Posterior vena cava (tissue), 2 donors: ENCODE measurements at regions of chr6 and their contacts with region 1.

Region 1: DNA sequence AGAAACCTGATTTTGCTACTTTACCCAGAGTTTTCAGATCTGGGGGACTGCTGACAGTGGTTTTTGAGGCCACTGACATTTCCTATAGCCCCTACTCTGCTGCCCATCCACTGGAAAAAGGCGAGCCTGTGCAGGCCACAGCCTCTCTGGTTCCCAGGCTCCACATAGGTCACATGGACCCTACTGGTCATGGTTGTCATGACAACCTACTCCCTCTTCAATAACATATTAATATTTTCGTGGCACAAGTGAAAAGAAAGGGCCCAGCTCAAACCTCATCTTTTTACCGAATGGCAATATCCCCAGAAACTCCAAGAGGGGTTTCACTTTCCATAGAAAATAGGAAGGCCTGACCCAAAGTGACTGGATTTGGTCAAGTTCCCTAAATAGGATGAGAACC is 11.0 kb upstream of the FOXO3 start:
- DNase-seq: no peak

Region 2: DNA sequence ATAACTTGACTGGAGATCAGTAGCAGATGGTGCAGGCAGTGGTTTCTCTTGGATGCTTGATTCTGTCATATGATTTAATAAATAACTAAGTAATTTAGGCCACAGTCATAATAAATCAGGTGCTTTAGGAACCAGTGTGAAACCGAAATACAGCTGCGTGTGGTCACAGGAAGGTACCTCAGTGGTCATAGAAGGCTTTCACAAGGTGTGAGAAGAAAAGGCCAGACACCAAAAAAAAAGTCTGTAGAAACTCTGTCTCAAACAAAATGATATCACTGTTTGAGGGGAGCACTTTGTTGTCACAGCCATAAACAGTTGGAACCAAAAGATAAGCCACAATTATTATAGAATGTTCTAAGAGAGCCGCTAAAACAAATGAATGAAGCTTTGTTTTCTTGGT is 355.0 kb after region 1 on chr6:
- intact Hi-C with region 1: no loop called
- DNase-seq: no peak

Region 3: GRCh38 chr6:109073344-109074132 is 523.8 kb after region 1 on chr6:
- intact Hi-C with region 1: loop called (anchors 5 kb)
- DNase-seq: no peak

Region 4: DNA sequence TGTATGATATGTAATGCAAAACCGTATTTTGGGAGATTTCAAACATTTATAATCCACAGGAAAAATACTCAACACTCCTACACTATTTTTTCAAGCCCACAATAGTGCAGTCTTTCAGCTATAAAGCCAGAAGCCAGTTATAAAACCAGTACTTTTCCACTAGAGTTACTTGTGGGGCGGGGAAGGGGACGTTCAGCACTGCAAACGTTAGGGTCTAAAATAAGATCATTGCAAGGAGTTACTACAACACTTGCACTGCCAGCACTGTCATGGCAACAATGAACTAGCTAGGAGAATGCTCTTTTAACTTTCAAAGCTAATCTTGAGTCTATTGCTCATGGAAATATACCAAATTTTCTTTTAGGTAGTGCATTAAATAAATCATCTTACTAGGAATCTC is 530.2 kb after region 1 on chr6:
- intact Hi-C with region 1: loop called in 1 of 2 experiments (anchors 5 kb)
- DNase-seq: no peak

Region 5: GRCh38 chr6:109482905-109483735 is 933.4 kb after region 1 on chr6 and contains the start of gene ZBTB24:
- intact Hi-C with region 1: no loop called
- DNase-seq: peak; percentile 97
- total RNA-seq, gene ZBTB24: 5.5 to 5.8 TPM